Activated CD4-positive, alpha-beta T cell treated with anti-CD3 and anti-CD28 coated beads for 36 hours (primary cell): ENCODE measurements at regions of chr18 and their contacts with region 1.

Region 1: DNA sequence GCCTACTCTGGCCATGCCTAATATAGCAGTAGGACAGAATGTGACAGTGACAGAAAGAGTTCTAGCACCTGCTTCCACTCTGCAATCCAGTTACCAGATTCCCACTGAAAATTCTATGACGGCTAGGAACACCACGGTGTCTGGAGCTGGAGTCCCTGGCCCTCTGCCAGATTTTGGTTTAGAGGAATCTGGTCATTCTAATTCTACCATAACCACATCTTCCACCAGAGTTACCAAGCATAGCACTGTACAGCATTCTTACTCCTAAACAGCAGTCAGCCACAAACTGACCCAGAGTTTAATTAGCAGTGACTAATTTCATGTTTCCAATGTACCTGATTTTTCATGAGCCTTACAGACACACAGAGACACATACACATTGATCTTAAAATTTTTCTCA is 45.2 kb upstream of the TTR start:
- DNase-seq: no peak
- ATAC-seq: no peak
- H3K4me3 Mint-ChIP-seq: no peak overlapping the region
- H3K27ac Mint-ChIP-seq: no peak overlapping the region
- H3K4me1 Mint-ChIP-seq: no peaks in the 10 kb centered on the region
- H3K27me3 Mint-ChIP-seq: no peaks in the 10 kb centered on the region

Region 2: DNA sequence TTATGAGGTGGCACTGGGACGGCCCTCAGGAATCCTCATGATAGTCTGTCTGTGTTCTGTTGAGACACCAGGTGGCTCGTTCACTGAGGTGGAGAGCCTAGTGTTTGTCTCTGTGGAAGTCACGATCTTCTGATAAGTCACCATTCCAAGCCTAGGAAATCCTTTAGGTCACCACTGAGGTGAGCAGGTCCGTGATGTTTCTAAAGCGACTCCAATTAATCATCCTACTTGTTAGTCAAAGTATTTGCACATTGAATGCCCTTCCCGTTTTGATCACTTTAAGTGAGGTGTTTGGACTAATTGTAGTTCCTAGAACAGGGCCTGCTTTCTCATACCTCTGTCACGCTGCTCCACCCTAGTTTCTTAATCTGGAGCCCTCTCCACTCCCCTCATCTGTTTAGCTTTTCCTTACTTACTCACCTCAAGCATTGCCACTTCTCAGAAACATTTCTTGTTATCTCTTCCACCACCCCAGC is 127.0 kb before region 1 on chr18:
- CTCF ChIA-PET with region 1: no interaction called
- POLR2A ChIA-PET with region 1: no interaction called
- intact Hi-C with region 1: no loop called
- DNase-seq: no peak
- ATAC-seq: no peak
- H3K4me3 Mint-ChIP-seq: no peak overlapping the region
- H3K27ac Mint-ChIP-seq: no peak overlapping the region
- H3K4me1 Mint-ChIP-seq: no peaks in the 10 kb centered on the region
- H3K27me3 Mint-ChIP-seq: no peaks in the 10 kb centered on the region

Region 3: GRCh38 chr18:31429621-31430020 is 116.9 kb before region 1 on chr18:
- CTCF ChIA-PET with region 1: no interaction called
- POLR2A ChIA-PET with region 1: no interaction called
- intact Hi-C with region 1: loop called in 1 of 2 experiments (anchors 5 kb)
- DNase-seq: no peak
- ATAC-seq: no peak
- H3K4me3 Mint-ChIP-seq: no peak overlapping the region
- H3K27ac Mint-ChIP-seq: no peak overlapping the region
- H3K4me1 Mint-ChIP-seq: no peaks in the 10 kb centered on the region
- H3K27me3 Mint-ChIP-seq: no peaks in the 10 kb centered on the region

Region 4: GRCh38 chr18:31533236-31533635 is 13.2 kb before region 1 on chr18:
- CTCF ChIA-PET with region 1: no interaction called
- POLR2A ChIA-PET with region 1: no interaction called
- intact Hi-C with region 1: no loop called
- DNase-seq: no peak
- ATAC-seq: no peak
- H3K4me3 Mint-ChIP-seq: no peak overlapping the region
- H3K27ac Mint-ChIP-seq: no peak overlapping the region
- H3K4me1 Mint-ChIP-seq: no peaks in the 10 kb centered on the region
- H3K27me3 Mint-ChIP-seq: no peaks in the 10 kb centered on the region